Psoas muscle (tissue), 8 donors: ENCODE measurements at regions of chr11 and their contacts with region 1.

Region 1: DNA sequence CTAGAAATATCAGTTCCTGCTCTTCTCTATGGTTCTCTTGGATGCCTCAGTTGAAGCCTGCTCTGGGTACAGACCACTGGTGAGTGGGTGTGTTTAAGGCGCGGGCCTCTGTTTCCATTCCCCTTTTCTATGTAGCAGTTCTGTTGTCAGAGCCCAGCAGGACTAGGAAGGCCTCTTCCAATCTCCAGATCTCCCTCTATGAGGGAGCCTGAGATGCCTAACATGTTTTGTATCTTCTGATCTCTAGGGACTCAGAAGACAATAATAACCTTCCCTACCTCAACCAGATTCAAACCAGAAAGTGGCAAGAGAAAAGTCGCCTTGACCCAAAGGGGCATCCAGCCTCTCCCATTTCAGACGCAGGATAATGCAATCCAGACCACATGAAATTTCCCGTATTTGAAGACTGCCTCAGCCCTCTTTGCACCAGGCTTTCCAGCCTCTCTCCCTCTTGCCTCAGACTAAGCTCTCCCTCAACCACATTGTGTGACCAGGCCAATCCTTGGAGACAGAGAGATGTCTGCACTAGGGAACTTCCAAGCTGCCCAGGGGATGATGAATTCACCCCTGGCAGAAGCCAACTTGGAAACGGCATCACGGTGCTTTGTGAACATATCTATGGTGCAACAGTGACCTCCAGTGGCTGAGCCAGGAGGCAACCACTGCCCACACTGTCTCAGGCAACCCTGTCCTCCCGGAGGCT is 150.1 kb upstream of the UBASH3B start:
- DNase-seq: peak; percentile 78 to 87
- ATAC-seq: peak; percentile 98 to 99 (median 99)
- H3K4me3 ChIP-seq: no peak overlapping the region
- H3K27ac ChIP-seq: no peak overlapping the region
- H3K4me1 ChIP-seq: peaks cover 9% of the 10 kb centered on the region
- H3K27me3 ChIP-seq: no peaks in the 10 kb centered on the region
- CTCF ChIP-seq: peak; percentile 87

Region 2: DNA sequence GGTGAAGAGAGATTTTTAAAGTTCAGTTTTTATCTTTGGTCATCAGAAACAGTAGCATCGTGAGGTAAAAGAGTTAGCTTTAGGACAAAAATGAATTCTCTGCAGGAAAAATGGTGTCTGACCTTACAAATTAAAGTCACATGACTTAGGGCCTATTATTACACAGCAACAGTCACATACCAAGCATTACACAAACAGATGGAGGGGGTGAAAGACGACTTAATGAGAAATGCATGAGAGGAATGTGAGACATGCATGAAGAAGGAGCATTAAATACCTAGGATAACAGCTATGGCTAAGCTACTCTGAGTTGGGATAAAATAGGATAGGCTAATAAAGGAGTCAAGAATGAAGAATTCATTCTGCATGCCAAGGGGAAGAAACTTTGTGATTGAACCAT is 466.9 kb before region 1 on chr11:
- intact Hi-C with region 1: loop called in 1 of 2 experiments (anchors 10 kb)
- DNase-seq: no peak
- ATAC-seq: peak in 1 of 4 donors; percentile 27
- H3K4me3 ChIP-seq: no peak overlapping the region
- H3K27ac ChIP-seq: no peak overlapping the region
- H3K4me1 ChIP-seq: no peaks in the 10 kb centered on the region
- H3K27me3 ChIP-seq: no peaks in the 10 kb centered on the region
- CTCF ChIP-seq: no peak

Region 3: GRCh38 chr11:122108192-122108799 is 397.2 kb before region 1 on chr11:
- intact Hi-C with region 1: loop called (anchors 5 to 10 kb)
- DNase-seq: no peak
- ATAC-seq: peak; percentile 35 to 51 (median 50)
- H3K4me3 ChIP-seq: no peak overlapping the region
- H3K27ac ChIP-seq: peak overlapping the region; percentile 84
- H3K4me1 ChIP-seq: peaks cover 6% of the 10 kb centered on the region
- H3K27me3 ChIP-seq: no peaks in the 10 kb centered on the region
- CTCF ChIP-seq: peak; percentile 52

Region 4: GRCh38 chr11:122215244-122215992 is 290.0 kb before region 1 on chr11:
- intact Hi-C with region 1: loop called (anchors 2 to 5 kb)
- DNase-seq: peak; percentile 78 to 89
- ATAC-seq: peak; percentile 94 to 98 (median 98)
- H3K4me3 ChIP-seq: no peak overlapping the region
- H3K27ac ChIP-seq: peak overlapping the region; percentile 64
- H3K4me1 ChIP-seq: peaks cover 12% of the 10 kb centered on the region
- H3K27me3 ChIP-seq: no peaks in the 10 kb centered on the region
- CTCF ChIP-seq: peak; percentile 92

Region 5: GRCh38 chr11:122293296-122294023 is 212.0 kb before region 1 on chr11:
- intact Hi-C with region 1: loop called in 1 of 2 experiments (anchors 10 kb)
- DNase-seq: no peak
- ATAC-seq: no peak
- H3K4me3 ChIP-seq: no peak overlapping the region
- H3K27ac ChIP-seq: no peak overlapping the region
- H3K4me1 ChIP-seq: no peaks in the 10 kb centered on the region
- H3K27me3 ChIP-seq: no peaks in the 10 kb centered on the region
- CTCF ChIP-seq: peak; percentile 13

Region 6: GRCh38 chr11:123238297-123238696 is 732.8 kb after region 1 on chr11:
- intact Hi-C with region 1: no loop called
- DNase-seq: peak; percentile 68 to 74
- ATAC-seq: peak in 3 of 4 donors; percentile 37 to 78 (median 66)
- H3K4me3 ChIP-seq: no peak overlapping the region
- H3K27ac ChIP-seq: no peak overlapping the region
- H3K4me1 ChIP-seq: no peaks in the 10 kb centered on the region
- H3K27me3 ChIP-seq: peaks cover 0 to 7% (median 0%) of the 10 kb centered on the region in 3 donors
- CTCF ChIP-seq: no peak